ENCODE measurements at regions of chr4 and their contacts with region 1.

Region 1: DNA sequence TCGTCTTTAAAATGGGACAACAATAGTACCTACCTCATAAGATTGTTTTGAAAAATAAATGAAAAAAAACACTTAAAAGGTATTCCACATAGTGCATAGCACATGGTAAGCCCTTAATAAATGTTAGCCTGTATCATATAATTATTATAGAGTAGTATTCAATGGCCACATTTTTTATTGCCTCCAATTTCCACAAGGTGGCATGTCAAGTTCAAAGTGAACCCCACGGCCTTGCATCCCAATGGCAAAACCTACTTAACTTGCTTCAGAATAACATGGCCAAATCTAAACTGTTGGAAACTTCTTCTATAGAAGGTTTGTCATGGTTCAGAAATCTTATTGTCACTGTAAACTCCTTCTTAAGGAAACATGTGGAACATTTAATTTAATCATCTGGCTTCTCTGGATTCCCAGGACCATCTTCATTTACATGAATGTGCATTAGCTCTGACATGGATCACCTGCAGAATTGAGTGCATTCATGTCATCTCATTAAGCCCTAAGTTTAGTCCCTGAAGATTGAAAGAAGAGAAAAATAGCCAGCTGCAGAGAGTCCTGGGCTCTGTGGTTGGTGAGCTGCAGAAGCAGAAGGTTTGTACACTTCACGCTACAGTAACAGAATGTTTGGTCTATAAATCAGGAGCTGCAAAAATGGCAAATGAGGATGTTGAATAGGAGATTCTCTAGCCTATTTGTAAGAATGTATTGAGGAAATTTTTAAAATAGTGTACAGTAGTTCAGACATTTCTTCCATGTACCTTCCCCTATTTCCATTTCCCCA is 61.0 kb downstream of the ANXA3 start:
- DNase-seq: peak in 1 of 10 donors; percentile 29
- H3K4me3 ChIP-seq: no peak overlapping the region
- H3K27ac ChIP-seq: no peak overlapping the region
- H3K27me3 ChIP-seq: peaks cover 0 to 4% (median 0%) of the 10 kb centered on the region in 45 donors
- CTCF ChIP-seq: peak; percentile 41 to 85 (median 68)

Region 2: GRCh38 chr4:78186597-78187543 is 425.7 kb before region 1 on chr4:
- intact Hi-C with region 1: no loop called
- DNase-seq: no peak
- H3K4me3 ChIP-seq: no peak overlapping the region
- H3K27ac ChIP-seq: no peak overlapping the region
- H3K27me3 ChIP-seq: no peaks in the 10 kb centered on the region
- CTCF ChIP-seq: no peak

Region 3: DNA sequence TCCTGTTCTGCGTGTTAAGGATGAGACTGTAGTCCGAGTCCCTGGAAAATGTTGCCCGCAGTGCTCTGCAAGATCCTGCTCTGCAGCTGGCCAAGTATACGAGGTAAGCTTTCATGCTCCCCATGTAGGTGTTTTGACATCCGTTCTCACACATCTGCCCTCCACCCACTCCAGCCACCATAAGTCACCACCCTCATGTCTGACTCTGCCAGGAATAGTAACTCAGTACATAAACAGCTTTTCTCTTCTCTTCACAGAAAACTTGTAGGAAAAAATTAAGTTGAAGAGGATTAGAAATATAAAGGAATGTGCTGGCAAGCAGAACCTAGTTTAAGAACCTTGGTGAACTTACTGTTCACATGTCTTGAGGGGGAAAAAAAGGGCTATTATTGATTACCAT is 347.6 kb before region 1 on chr4:
- intact Hi-C with region 1: no loop called
- DNase-seq: no peak
- H3K4me3 ChIP-seq: no peak overlapping the region
- H3K27ac ChIP-seq: no peak overlapping the region
- H3K27me3 ChIP-seq: no peaks in the 10 kb centered on the region
- CTCF ChIP-seq: no peak

Region 4: DNA sequence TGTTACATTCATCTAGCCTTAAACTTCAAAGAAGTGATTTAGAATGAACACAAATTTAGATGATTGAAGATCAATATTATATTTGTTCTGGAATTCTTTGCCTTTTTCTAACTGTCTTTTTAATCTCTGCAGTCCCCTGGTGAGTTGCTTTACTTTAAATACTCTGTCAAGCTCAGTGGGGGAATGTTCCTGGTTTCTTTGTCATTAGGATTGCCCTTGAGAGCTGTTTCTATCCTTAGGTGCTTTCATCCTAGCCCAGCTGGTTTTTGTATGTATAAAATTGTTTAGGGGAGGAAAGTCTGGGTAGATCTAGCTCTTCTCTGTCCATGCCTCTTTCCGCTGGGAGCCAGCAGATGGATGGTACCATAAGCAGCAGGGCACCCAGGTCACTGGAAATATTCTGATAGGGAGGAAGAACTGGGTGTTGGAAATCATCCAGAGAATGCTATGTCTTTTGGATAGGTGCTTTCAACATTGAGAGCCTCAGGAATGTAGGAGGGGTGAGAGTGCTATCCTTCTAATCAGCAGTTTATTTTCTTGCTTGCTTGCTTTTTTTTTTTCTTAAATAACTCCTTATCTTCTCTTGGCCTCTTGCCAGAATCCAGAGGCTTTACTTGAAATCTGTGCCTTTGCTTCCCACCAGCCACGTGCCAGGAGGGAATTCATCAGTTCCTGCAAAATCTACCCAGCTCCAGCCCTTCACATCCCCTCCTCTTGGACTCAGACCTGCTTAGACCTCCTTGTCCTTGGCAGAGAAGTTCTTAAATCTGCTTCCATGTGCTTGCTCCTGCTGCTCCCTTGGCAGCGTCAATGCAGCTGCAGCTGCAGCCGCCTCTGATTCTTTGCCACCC is 276.3 kb before region 1 on chr4:
- intact Hi-C with region 1: no loop called
- DNase-seq: no peak
- H3K4me3 ChIP-seq: no peak overlapping the region
- H3K27ac ChIP-seq: no peak overlapping the region
- H3K27me3 ChIP-seq: no peaks in the 10 kb centered on the region
- CTCF ChIP-seq: no peak

Region 5: GRCh38 chr4:78644744-78645330 is 32.2 kb after region 1 on chr4:
- intact Hi-C with region 1: loop called in 1 of 2 experiments (anchors 5 kb)
- DNase-seq: peak in 4 of 10 donors; percentile 33 to 63 (median 52)
- H3K4me3 ChIP-seq: peak overlapping the region in 2 of 59 donors; percentile 3 to 35
- H3K27ac ChIP-seq: peak overlapping the region in 52 of 59 donors; percentile 0 to 92 (median 78)
- H3K27me3 ChIP-seq: no peaks in the 10 kb centered on the region
- CTCF ChIP-seq: peak; percentile 60 to 97 (median 88)

Region 6: DNA sequence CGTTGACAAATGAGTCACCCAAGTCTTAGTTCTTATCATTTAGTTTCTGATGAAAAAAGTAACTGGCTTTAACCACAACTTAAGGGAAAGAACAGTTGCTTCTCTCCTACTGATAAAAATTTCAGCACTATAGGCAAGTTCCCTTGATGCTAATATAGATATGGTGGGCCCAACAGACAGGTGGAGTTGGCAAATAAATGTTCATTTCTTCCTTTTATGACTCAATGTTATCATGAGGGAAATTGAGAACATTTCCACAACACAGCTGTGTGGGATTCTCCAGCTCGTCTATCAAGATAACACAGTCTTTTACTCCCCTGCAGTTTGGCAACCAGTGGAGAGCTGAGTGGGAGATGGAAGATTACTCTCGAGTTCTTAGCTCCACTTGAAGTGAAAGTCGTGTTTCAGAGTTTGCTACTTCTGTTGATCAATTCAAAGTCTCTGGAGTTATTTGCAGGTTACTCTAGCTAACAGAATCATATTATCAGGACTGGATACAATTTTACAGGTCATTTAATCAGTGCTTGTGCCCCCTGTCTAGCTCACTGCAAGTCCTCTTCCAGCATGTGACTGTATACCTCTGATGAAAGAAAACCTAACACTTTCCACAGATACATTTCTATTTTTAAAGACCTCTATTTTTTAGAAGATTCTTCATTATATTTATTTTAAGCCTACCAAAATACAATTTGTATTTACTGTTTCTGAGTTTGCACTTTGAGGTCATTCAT is 1066.0 kb after region 1 on chr4:
- intact Hi-C with region 1: no loop called
- DNase-seq: peak in 2 of 10 donors; percentile 30 to 52
- H3K4me3 ChIP-seq: no peak overlapping the region
- H3K27ac ChIP-seq: no peak overlapping the region
- H3K27me3 ChIP-seq: no peaks in the 10 kb centered on the region
- CTCF ChIP-seq: no peak

Measured in dorsolateral prefrontal cortex (tissue), 120 donors.